ENCODE measurements at regions of chr3 and their contacts with region 1.

Region 1: DNA sequence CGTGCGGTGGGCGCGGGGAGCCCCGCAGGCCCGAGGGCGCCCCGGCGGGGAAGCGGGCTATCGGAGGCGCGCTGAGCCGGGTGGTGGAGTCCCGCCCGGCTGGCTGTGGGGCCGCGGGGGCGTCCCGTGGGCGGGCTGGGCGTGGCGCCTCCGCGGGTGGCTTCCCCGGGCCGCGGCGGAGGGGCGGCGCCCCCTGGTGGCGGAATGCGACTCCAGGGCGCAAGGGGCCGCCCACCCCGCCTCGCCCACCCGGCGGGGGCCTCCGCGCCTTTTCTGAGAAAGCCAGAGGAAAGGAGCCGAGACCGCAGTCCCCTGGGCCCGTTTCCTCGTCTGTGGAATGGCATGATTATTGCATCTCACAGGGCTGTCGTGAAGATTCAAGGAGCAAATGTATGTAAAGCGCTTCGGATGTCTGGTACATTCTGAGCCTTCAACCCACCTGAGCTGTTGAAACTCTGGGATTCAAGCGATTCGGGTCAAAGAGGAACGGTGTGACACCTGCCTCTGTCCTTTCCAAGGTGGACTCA is 31.9 kb upstream of the RAB6B start:
- DNase-seq: peak in 1 of 2 donors; percentile 92
- ATAC-seq: peak; percentile 87
- H3K4me3 ChIP-seq: peak overlapping the region; percentile 28 to 54
- H3K27ac ChIP-seq: no peak overlapping the region
- H3K4me1 ChIP-seq: no peaks in the 10 kb centered on the region
- H3K27me3 ChIP-seq: no peaks in the 10 kb centered on the region

Region 2: DNA sequence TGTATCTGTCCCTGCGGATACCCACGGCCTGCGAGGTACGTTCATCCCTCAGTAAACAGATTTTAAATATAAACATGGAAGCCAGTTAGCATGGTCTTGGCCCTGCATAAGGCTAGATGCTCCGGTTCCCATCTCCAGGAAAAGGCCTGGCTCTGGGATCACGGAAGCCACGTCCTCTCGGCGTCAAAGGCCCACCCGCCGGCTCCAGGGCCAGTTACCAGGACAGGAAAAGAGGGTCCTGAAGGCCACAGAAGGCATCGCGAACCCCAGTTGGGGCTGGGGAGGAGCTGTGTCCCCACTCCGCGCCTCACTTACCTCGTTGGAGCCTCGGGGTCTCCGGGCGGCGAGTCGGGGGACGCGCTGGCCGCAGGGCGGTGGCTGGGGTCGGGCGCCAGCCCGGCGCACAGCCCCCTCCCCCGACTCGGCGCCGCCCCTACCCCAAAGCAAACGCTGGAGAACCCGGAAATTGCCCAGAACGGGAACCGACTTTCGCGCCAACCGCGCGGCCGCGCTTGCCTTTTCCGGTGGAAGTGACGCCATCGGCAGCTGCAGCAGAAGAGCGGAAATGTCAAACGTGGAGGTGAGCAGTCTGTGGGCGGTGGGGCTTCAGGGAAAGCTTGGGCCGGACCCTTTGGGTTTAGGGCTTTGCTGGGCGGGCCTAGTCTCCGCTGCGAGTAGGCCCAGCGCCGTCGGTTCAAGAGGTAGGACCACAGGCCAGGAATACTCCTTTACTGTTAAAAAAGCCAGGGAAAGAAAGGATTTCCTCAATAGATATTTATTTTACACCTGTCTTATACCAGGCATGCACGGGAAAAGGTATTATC is 265.9 kb before region 1 on chr3 and contains the start of gene TOPBP1:
- intact Hi-C with region 1: loop called in 1 of 2 experiments (anchors 10 kb)
- DNase-seq: peak; percentile 87 to 94
- ATAC-seq: peak; percentile 80
- H3K4me3 ChIP-seq: peak within 1 kb of the TSS; percentile 66 to 76
- H3K27ac ChIP-seq: peak within 1 kb of the TSS in 1 of 2 donors; percentile 58
- H3K4me1 ChIP-seq: no peaks in the 10 kb centered on the region
- H3K27me3 ChIP-seq: no peaks in the 10 kb centered on the region
- total RNA-seq, gene TOPBP1: 16.8 to 23.2 TPM

Region 3: DNA sequence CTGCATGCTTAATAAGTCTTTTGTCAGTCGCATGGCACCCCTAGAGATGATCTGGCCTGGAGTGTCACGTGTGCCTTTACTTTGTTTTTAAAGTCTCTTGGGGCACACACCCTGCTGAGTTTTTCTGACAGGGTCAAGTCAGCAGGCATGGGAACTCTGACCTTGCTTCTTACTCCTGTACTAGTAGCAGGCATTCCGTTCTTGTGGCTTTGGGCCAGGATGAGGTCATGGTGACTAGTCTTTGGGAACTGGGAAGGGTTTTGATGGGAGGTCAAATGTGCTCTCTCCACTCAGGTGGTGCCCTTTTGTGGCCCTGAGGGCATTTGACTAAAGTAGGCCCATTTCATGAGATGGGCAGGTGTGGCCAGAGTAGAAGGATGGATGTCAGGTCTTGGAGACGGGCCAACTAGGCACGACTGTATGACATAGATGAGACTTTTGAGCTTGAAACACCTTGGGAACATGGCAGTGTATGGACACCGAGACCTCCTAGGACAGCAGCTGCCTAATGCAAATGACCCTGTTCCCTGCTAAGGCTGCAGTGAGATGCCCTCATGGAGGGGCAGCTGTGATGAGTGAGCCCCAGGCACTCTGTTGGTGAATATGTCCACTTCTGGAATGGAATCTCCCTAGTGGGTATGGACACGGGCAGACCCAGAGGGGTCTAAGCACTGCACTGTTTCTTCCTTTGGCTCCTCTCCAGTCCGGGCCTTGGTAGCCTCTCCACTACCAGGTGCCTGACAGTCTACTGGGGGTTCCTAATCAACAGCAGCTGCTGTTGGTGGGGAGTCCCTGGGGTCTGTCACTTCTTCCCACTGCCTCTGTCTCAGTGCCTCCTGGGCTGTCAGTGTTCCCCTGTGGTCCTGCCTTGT is 105.6 kb before region 1 on chr3:
- intact Hi-C with region 1: loop called (anchors 1 to 2 kb)
- DNase-seq: peak; percentile 61 to 89
- ATAC-seq: peak; percentile 33
- H3K4me3 ChIP-seq: no peak overlapping the region
- H3K27ac ChIP-seq: no peak overlapping the region
- H3K4me1 ChIP-seq: no peaks in the 10 kb centered on the region
- H3K27me3 ChIP-seq: no peaks in the 10 kb centered on the region

Region 4: GRCh38 chr3:133991637-133992036 is 64.0 kb after region 1 on chr3:
- intact Hi-C with region 1: no loop called
- DNase-seq: peak in 1 of 2 donors; percentile 22
- ATAC-seq: no peak
- H3K4me3 ChIP-seq: no peak overlapping the region
- H3K27ac ChIP-seq: no peak overlapping the region
- H3K4me1 ChIP-seq: no peaks in the 10 kb centered on the region
- H3K27me3 ChIP-seq: no peaks in the 10 kb centered on the region

Region 5: DNA sequence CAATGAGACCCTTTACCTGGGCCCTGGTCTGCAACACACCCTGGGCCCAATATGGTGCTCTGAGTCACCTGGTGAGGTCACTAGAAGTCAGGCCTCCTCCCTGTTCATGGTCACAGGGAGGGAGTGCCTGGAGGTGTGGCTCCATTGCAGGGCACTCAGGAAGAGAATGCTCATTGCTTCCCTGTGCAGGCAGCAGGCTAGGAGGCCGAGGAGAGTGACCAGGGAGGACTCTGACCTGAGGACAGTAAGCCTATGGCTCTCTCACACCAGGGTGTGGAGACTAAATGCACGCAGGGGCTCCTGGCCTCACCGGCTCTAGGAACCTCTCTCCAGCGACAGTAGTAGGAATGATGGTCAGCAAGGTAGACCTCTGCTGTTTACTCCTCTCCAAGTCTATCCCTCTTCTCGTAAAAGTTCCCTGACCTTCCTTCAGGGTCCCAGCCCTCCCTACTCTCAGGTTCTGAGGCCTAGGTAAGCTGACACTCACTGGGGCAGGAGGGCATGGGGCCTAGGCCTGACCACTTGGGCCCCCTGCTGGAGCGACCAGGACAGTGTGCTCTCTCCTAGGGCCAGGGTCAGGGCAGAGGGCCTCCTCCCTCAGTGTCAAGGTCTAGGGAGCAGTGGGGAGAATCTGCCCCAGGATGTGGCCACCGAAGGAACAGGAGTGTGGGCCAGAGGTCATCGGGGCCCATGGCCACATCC is 111.7 kb after region 1 on chr3:
- intact Hi-C with region 1: loop called in 1 of 2 experiments (anchors 5 kb)
- DNase-seq: no peak
- ATAC-seq: peak; percentile 67
- H3K4me3 ChIP-seq: no peak overlapping the region
- H3K27ac ChIP-seq: no peak overlapping the region
- H3K4me1 ChIP-seq: no peaks in the 10 kb centered on the region
- H3K27me3 ChIP-seq: no peaks in the 10 kb centered on the region

Region 6: DNA sequence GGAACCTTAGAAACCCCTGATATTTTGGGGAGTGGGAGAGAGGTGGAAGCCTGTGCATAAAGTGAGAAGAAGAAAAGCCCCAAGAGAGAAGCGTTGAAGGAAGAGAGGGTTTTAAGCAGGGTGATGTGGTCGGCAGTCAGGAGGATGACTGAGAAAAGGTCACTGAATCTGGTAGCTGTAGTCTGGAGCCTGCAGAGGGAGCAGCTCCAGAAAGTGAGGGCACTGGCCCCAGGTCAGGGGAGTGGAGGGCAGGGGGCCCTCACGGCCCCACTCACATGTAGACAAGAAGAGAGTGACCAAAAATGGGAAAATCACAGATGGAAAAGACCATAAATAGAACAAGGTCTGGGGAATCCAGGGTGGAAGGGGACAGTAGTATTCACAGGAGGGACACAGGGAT is 217.6 kb after region 1 on chr3:
- intact Hi-C with region 1: loop called in 1 of 2 experiments (anchors 10 kb)
- DNase-seq: no peak
- ATAC-seq: no peak
- H3K4me3 ChIP-seq: no peak overlapping the region
- H3K27ac ChIP-seq: no peak overlapping the region
- H3K4me1 ChIP-seq: no peaks in the 10 kb centered on the region
- H3K27me3 ChIP-seq: no peaks in the 10 kb centered on the region

Measured in aorta (tissue), 5 donors.